Posterior cingulate gyrus (tissue), 11 donors: ENCODE measurements at regions of chrX and their contacts with region 1.

Region 1: DNA sequence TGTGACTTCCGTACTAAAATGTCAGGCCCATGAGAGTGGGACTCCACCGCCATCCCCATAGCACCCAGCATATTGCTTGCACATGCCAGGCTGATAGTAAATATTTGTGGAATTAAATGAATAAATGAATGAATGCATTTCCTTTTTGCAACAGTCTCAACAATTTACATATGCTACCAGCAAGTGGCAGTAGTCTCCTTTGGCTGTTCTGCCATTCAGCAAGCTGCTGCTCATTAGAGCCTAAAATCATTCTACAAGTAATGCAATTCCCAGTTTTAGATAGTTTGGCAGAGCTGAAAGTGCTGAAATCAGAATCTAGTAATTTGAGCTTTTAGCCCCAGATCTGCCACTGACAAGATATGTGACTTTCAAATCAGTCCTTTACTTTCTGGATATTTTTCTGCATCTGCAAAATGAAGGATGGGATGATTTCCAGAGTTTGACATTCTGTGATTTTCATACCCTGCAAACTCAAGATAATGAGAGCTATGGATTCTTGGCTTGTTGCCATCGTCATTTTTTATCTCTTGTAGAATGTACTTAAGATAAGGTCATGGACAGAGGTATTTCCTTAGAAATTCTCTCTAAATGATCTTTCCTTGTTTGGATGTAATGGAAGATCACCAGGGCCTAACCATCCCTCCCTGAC is 35.7 kb upstream of the INTS6L start:
- DNase-seq: peak in 1 of 10 donors; percentile 1

Region 2: GRCh38 chrX:134718105-134718965 is 766.4 kb before region 1 on chrX:
- intact Hi-C with region 1: no loop called
- DNase-seq: no peak

Region 3: GRCh38 chrX:135572436-135572835 is 87.7 kb after region 1 on chrX:
- intact Hi-C with region 1: loop called (anchors 10 kb)
- DNase-seq: no peak